ENCODE measurements at regions of chr5 and their contacts with region 1.

Region 1: GRCh38 chr5:81165493-81166119 is 67.5 kb upstream of the CKMT2 start:
- DNase-seq: peak; percentile 34
- H3K4me3 Mint-ChIP-seq: no peak overlapping the region
- H3K27ac Mint-ChIP-seq: no peak overlapping the region
- H3K4me1 Mint-ChIP-seq: peaks cover 14% of the 10 kb centered on the region
- H3K27me3 Mint-ChIP-seq: no peaks in the 10 kb centered on the region

Region 2: GRCh38 chr5:80481019-80481893 is 684.4 kb before region 1 on chr5:
- intact Hi-C with region 1: loop called (anchors 2 kb)
- DNase-seq: peak; percentile 11
- H3K4me3 Mint-ChIP-seq: no peak overlapping the region
- H3K27ac Mint-ChIP-seq: no peak overlapping the region
- H3K4me1 Mint-ChIP-seq: peaks cover 6% of the 10 kb centered on the region
- H3K27me3 Mint-ChIP-seq: peaks cover 2% of the 10 kb centered on the region

Region 3: GRCh38 chr5:80686757-80687156 is 478.8 kb before region 1 on chr5:
- intact Hi-C with region 1: loop called (anchors 1 kb)
- DNase-seq: no peak
- H3K4me3 Mint-ChIP-seq: no peak overlapping the region
- H3K27ac Mint-ChIP-seq: no peak overlapping the region
- H3K4me1 Mint-ChIP-seq: peaks cover 34% of the 10 kb centered on the region
- H3K27me3 Mint-ChIP-seq: no peaks in the 10 kb centered on the region

Region 4: GRCh38 chr5:80711938-80712337 is 453.7 kb before region 1 on chr5:
- intact Hi-C with region 1: loop called (anchors 5 kb)
- DNase-seq: no peak
- H3K4me3 Mint-ChIP-seq: no peak overlapping the region
- H3K27ac Mint-ChIP-seq: peak overlapping the region; percentile 47
- H3K4me1 Mint-ChIP-seq: peaks cover 34% of the 10 kb centered on the region
- H3K27me3 Mint-ChIP-seq: no peaks in the 10 kb centered on the region